ENCODE measurements at regions of chr17 and their contacts with region 1.

Region 1: GRCh38 chr17:46722662-46723285 is 95.7 kb downstream of the WNT3 start:
- DNase-seq: no peak
- CTCF ChIP-seq: no peak

Region 2: GRCh38 chr17:45965812-45966211 is 757.0 kb before region 1 on chr17:
- in situ Hi-C with region 1: no loop called
- DNase-seq: no peak
- CTCF ChIP-seq: no peak

Region 3: GRCh38 chr17:46822388-46822921 is 99.7 kb after region 1 on chr17:
- in situ Hi-C with region 1: loop called (anchors 25 kb)
- DNase-seq: peak; percentile 58
- CTCF ChIP-seq: peak; percentile 70